ENCODE measurements at regions of chr1 and their contacts with region 1.

Region 1: DNA sequence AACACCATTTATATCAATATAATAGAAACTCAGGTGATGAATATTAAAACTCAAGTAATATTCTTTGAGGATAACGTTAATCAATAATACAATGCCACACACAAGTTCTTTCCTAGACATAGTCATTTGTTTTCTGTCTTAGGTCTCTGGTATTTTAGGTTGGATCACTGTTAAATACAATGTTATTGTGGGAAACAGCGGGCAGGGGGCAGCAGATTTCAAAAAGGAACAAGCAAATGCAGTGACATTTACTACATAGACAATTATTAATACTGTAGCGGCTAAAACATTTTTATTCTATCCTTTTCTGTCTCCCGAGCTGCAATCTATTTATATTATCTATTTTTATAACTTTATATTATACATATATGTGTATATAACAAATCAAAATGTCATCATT is 186.4 kb upstream of the ZNHIT6 start:
- DNase-seq: peak; percentile 61 to 78 (median 71)
- H3K4me3 ChIP-seq: no peak overlapping the region
- H3K27ac ChIP-seq: no peak overlapping the region
- H3K4me1 ChIP-seq: no peaks in the 10 kb centered on the region
- H3K27me3 ChIP-seq: no peaks in the 10 kb centered on the region

Region 2: GRCh38 chr1:85838238-85838637 is 56.4 kb before region 1 on chr1:
- CTCF ChIA-PET with region 1: no interaction called
- POLR2A ChIA-PET with region 1: no interaction called
- DNase-seq: peak in 2 of 3 donors; percentile 33 to 40
- H3K4me3 ChIP-seq: no peak overlapping the region
- H3K27ac ChIP-seq: no peak overlapping the region
- H3K4me1 ChIP-seq: no peaks in the 10 kb centered on the region
- H3K27me3 ChIP-seq: no peaks in the 10 kb centered on the region

Region 3: GRCh38 chr1:85865213-85865612 is 29.4 kb before region 1 on chr1:
- CTCF ChIA-PET with region 1: no interaction called
- POLR2A ChIA-PET with region 1: no interaction called
- DNase-seq: no peak
- H3K4me3 ChIP-seq: no peak overlapping the region
- H3K27ac ChIP-seq: no peak overlapping the region
- H3K4me1 ChIP-seq: peaks cover 0 to 9% (median 6%) of the 10 kb centered on the region in 4 experiments
- H3K27me3 ChIP-seq: no peaks in the 10 kb centered on the region

Region 4: GRCh38 chr1:86018283-86018923 is 123.8 kb after region 1 on chr1:
- CTCF ChIA-PET with region 1: interaction called, 30 read pairs
- POLR2A ChIA-PET with region 1: no interaction called
- DNase-seq: peak; percentile 40 to 71 (median 62)
- H3K4me3 ChIP-seq: no peak overlapping the region
- H3K27ac ChIP-seq: no peak overlapping the region
- H3K4me1 ChIP-seq: no peaks in the 10 kb centered on the region
- H3K27me3 ChIP-seq: no peaks in the 10 kb centered on the region

Region 5: GRCh38 chr1:86356247-86356646 is 461.6 kb after region 1 on chr1:
- CTCF ChIA-PET with region 1: interaction called, 19 read pairs
- POLR2A ChIA-PET with region 1: no interaction called
- DNase-seq: peak; percentile 35 to 51 (median 46)
- H3K4me3 ChIP-seq: no peak overlapping the region
- H3K27ac ChIP-seq: no peak overlapping the region
- H3K4me1 ChIP-seq: no peaks in the 10 kb centered on the region
- H3K27me3 ChIP-seq: no peaks in the 10 kb centered on the region